ENCODE measurements at regions of chr1 and their contacts with region 1.

Region 1: DNA sequence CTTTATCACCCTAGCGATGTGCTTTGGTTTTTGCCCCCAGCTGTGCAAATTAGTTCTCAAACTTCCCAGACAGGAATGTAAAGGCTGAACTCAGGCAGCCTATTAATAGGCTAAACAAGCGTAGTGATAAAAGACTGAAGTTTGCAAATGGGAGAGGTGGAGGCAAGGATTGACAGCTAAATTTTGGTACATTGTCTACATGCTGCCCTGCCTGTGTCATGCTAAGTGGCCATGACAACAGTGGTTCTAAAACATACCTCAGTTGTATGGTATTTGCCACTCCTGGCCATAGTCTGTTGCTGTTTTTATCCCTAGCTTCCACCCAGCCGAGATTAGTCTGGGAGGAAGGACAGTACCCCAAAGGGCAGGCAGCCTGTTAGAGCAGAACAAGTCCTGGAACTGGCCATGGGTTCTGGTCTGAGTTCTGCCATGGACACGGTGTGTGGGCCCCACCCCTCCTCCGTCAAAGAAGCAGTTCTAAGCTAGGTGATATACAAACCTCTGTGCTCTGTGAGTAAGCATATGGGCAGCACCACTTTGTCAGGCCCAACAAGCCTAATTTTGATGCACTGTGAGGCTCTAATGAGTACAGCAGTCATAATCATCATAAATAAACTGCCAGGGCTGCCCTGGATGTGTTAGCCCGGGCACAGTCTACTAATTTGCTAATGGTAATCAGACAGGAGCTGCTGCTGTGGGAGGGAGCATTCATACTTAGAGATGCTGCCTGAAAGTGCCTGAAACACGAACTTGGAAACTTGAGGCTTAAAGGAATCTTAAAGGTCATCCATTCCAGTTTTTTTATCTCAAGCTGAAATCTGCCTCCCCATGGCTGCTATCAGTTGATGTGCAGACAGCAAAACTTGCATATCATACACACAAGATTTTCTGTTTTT is 177.1 kb downstream of the HHAT start:
- DNase-seq: peak in 2 of 5 donors; percentile 8 to 25
- ATAC-seq: peak; percentile 87 to 95 (median 90)
- H3K4me3 ChIP-seq: no peak overlapping the region
- H3K27ac ChIP-seq: peak overlapping the region in 7 of 12 donors; percentile 34 to 67 (median 57)
- H3K4me1 ChIP-seq: peaks cover 0 to 12% (median 0%) of the 10 kb centered on the region in 12 donors
- H3K27me3 ChIP-seq: no peaks in the 10 kb centered on the region
- CTCF ChIP-seq: no peak
- POLR2A ChIP-seq: no peak

Region 2: DNA sequence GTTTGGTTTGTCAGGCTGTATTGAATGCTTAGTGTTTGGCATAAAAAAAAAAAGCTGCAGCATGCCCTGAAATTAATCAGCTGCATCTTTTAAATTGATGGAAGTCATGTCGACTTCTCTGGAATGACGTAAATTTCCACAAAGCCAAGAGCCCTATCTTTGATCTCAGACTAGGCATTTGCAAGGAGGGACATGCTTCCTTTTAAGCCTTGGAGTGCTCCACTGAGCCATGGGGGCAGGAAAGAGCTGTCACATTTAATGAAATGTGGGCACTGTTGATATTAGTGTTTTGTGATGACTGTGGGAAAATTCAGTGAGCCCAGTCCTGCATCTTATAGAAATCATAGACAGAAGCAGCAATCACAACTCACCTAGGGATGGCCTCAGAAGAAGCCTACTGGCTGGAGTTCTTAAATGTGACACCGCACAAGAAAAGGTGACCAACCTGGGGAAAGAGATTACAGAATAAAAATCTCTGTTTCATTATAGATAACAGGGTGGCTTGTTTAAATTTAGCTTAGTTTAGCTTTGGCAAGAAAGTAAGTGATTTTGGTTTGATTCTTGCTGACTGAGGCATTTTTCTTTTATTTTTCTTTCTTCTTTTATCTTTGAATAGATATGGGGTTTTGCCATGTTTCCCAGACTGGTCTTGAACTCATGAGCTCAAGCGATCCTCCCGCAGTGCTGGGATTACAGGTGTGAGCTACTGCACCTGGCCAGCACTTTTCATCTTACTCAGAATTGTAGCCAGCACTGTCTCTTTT is 11.0 kb after region 1 on chr1:
- intact Hi-C with region 1: loop called in 1 of 10 experiments (anchors 1 kb)
- DNase-seq: no peak
- ATAC-seq: no peak
- H3K4me3 ChIP-seq: no peak overlapping the region
- H3K27ac ChIP-seq: no peak overlapping the region
- H3K4me1 ChIP-seq: no peaks in the 10 kb centered on the region
- H3K27me3 ChIP-seq: no peaks in the 10 kb centered on the region
- CTCF ChIP-seq: no peak
- POLR2A ChIP-seq: no peak

Measured in heart left ventricle (tissue), 16 donors.